ENCODE measurements at regions of chr5 and their contacts with region 1.

Region 1: GRCh38 chr5:178146020-178146820 is 7.5 kb downstream of the NHP2 start:
- H3K4me3 ChIP-seq: no peak overlapping the region
- H3K27ac ChIP-seq: no peak overlapping the region
- H3K4me1 ChIP-seq: no peaks in the 10 kb centered on the region
- CTCF ChIP-seq: peak; percentile 69

Region 2: GRCh38 chr5:178130604-178131485 is 15.4 kb before region 1 on chr5 and contains the start of gene RMND5B:
- CTCF ChIA-PET with region 1: interaction called, 18 read pairs
- POLR2A ChIA-PET with region 1: interaction called, 10 read pairs
- H3K4me3 ChIP-seq: peak within 1 kb of the TSS; percentile 91
- H3K27ac ChIP-seq: peak within 1 kb of the TSS; percentile 93
- H3K4me1 ChIP-seq: no peaks in the 10 kb centered on the region
- CTCF ChIP-seq: no peak

Region 3: DNA sequence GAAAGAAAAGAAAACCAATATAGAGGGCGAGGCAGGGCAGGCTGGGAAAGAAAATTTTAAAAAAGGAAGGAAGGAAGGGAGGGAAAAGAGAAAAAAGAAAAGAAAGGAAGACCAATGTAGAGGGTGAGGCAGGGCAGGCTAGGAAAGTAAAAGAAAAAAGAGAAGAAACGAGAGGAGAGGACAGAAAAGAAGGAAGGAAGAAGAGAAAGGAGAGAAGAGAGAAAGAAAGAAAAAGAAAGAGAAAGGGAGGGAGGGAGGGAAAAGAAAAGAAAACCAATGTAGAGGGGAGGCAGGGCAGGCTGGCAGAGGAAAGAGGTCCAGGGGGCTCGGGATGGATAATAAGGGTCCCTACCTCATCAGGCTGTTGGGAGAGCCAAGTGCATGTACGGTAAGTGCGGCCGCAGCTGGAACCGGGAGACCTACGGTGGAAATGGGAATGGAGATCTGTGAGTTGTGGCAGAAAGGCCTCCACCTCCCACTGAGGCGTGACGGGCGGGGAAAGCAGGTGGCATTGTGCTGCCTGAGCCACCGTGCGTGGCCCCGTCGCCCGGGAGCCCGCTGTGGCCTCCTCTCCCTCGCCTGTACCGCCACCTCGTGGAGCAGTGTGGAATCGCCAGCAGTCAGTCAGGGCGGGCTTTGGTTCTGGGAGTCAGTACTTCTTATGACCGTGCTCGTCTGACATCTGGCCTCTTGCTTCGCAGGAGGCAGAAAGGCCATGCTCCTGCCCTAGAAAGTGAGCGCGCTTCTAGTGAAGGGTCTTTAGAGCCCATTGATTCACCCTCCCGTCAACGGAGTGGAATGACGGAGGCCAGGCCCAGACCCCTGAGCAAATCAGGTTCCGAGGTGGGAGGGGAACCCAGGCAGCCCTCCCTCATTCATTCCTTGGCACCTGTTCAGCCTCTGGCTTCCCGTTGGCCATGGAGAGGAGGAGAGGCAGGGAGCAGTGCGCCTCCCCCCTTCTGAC is 17.8 kb after region 1 on chr5:
- CTCF ChIA-PET with region 1: interaction called, 10 read pairs
- POLR2A ChIA-PET with region 1: no interaction called
- H3K4me3 ChIP-seq: peak overlapping the region; percentile 10; the same call in 1 of the 2 replicates
- H3K27ac ChIP-seq: no peak overlapping the region
- H3K4me1 ChIP-seq: no peaks in the 10 kb centered on the region
- CTCF ChIP-seq: peak; percentile 97

Region 4: GRCh38 chr5:178176791-178177190 is 30.6 kb after region 1 on chr5:
- CTCF ChIA-PET with region 1: no interaction called
- POLR2A ChIA-PET with region 1: no interaction called
- H3K4me3 ChIP-seq: no peak overlapping the region
- H3K27ac ChIP-seq: no peak overlapping the region
- H3K4me1 ChIP-seq: no peaks in the 10 kb centered on the region
- CTCF ChIP-seq: no peak

Region 5: DNA sequence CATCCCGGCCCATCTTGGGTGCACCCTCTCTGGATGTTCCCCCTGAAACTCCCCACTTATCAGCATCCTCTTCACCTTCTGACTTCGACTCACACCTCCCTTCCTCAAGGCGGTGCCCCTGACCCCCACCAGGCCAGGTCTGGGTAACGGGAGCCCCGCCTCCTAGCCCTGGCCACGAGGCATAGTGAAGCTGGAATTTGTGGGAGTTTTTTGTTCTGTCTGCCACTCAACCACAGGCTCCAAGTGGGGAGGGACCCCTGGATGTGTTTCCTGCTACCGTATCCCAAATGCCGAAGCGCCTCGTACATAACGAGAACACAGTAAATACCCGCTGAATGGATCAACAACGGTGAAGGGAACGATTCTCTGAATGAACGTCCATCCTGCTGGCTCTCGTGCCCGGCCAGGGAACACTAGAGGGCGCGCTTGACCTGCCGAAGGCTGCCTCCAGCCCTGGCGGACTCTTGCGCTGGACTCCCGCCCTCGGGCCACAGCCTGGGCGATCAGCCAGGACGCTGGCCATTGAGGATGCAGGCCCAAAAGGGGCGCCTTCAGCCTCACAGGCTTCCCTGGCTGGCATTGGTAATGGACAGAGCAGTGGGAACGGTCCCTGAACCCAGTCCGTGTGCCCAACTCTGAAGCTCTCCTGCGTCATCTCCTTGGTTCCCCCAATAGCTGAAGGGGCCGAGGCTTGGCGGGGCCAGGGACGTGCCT is 133.7 kb after region 1 on chr5:
- CTCF ChIA-PET with region 1: no interaction called
- POLR2A ChIA-PET with region 1: no interaction called
- H3K4me3 ChIP-seq: no peak overlapping the region
- H3K27ac ChIP-seq: no peak overlapping the region
- H3K4me1 ChIP-seq: no peaks in the 10 kb centered on the region
- CTCF ChIP-seq: peak; percentile 91